Ascending aorta (tissue), 2 donors: ENCODE measurements at regions of chr10 and their contacts with region 1.

Region 1: DNA sequence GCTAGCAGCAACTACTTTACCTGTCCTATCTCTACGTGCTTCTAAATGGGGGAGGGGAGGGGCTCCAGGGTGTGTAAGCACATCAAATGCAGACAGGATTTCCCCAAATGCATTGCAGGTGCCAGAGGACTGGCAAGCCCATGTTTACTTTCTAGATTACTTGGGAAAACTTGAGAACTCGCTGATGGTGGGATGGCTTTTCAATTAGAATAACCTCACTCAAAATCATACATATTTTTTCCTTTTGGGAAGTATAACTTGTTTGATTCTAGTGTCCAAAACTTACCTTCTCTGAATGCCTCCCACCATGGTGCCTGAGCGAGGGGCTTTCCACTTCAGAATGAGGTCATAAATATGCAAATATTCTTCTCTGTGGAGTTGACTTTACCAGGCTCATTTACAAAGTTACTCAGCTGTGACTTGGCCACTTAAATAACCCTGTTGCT is 191.3 kb upstream of the RHOBTB1 start:
- DNase-seq: no peak
- H3K4me3 ChIP-seq: no peak overlapping the region
- H3K27ac ChIP-seq: no peak overlapping the region
- H3K4me1 ChIP-seq: no peaks in the 10 kb centered on the region
- H3K27me3 ChIP-seq: no peaks in the 10 kb centered on the region
- CTCF ChIP-seq: no peak

Region 2: DNA sequence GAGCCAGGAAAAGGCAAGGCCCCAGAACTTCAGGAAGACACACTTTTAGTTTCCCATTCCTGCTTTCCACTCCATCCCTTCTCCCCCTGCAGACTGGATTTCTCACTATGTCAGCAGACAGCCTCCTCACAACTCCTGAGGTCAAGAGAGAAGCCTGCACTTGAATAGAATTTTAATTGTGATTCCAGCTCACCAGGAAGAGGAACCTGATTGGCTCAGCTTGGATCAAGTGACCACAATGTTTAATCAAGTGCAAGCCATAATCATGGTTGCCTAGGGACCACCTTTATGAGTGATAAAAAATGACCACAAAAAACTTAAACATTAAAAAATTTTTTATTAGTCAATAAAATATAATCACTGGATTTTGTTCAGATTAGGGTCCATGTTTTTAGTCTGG is 53.4 kb after region 1 on chr10:
- intact Hi-C with region 1: loop called (anchors 5 kb)
- DNase-seq: no peak
- H3K4me3 ChIP-seq: no peak overlapping the region
- H3K27ac ChIP-seq: no peak overlapping the region
- H3K4me1 ChIP-seq: no peaks in the 10 kb centered on the region
- H3K27me3 ChIP-seq: no peaks in the 10 kb centered on the region
- CTCF ChIP-seq: no peak

Region 3: GRCh38 chr10:61733358-61733940 is 598.1 kb after region 1 on chr10:
- intact Hi-C with region 1: loop called (anchors 5 kb)
- DNase-seq: no peak
- H3K4me3 ChIP-seq: no peak overlapping the region
- H3K27ac ChIP-seq: no peak overlapping the region
- H3K4me1 ChIP-seq: no peaks in the 10 kb centered on the region
- H3K27me3 ChIP-seq: no peaks in the 10 kb centered on the region
- CTCF ChIP-seq: peak; percentile 18 to 56 (median 56)